B cell (primary cell): ENCODE measurements at regions of chr12 and their contacts with region 1.

Region 1: DNA sequence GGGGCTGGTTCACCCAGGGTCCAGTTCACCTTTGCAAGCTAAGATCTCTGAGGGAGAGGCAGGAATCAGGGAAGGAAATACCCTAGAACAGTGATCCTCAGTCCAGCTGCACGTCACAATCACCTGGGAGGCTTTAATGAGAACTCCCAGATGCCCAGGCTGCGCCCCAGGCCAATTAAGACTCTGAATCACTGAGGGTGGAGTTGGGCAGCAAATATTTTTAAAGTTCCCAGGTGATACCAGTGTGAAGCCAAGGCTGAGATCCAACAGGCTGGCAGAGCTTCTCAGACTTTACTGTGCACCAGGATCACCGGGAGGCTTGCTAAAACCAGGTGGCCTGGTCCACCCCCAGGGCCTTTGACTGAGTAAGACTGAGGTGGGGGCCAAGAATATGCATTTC is 23.8 kb downstream of the MYL2 start:
- DNase-seq: no peak
- ATAC-seq: no peak
- H3K4me3 ChIP-seq: no peak overlapping the region
- H3K4me3 Mint-ChIP-seq: no peak overlapping the region
- H3K27ac ChIP-seq: no peak overlapping the region
- H3K27ac Mint-ChIP-seq: no peak overlapping the region
- H3K4me1 ChIP-seq: peaks cover 5 to 9% of the 10 kb centered on the region in 2 donors
- H3K4me1 Mint-ChIP-seq: peaks cover 4% of the 10 kb centered on the region
- H3K27me3 ChIP-seq: peaks cover 0 to 5% (median 0%) of the 10 kb centered on the region in 4 experiments
- H3K27me3 Mint-ChIP-seq: no peaks in the 10 kb centered on the region
- CTCF ChIP-seq: no peak

Region 2: GRCh38 chr12:110860833-110861296 is 35.7 kb before region 1 on chr12:
- CTCF ChIA-PET with region 1: no interaction called
- POLR2A ChIA-PET with region 1: no interaction called
- intact Hi-C with region 1: no loop called
- DNase-seq: no peak
- ATAC-seq: no peak
- H3K4me3 ChIP-seq: no peak overlapping the region
- H3K4me3 Mint-ChIP-seq: no peak overlapping the region
- H3K27ac ChIP-seq: no peak overlapping the region
- H3K27ac Mint-ChIP-seq: no peak overlapping the region
- H3K4me1 ChIP-seq: no peaks in the 10 kb centered on the region
- H3K4me1 Mint-ChIP-seq: peaks cover 8% of the 10 kb centered on the region
- H3K27me3 ChIP-seq: no peaks in the 10 kb centered on the region
- H3K27me3 Mint-ChIP-seq: no peaks in the 10 kb centered on the region
- CTCF ChIP-seq: no peak

Region 3: GRCh38 chr12:110913119-110914056 is 16.8 kb after region 1 on chr12:
- CTCF ChIA-PET with region 1: interaction called, 16 read pairs
- POLR2A ChIA-PET with region 1: no interaction called
- intact Hi-C with region 1: no loop called
- DNase-seq: peak; percentile 90
- ATAC-seq: peak; percentile 96
- H3K4me3 ChIP-seq: peak overlapping the region in 2 of 5 experiments; percentile 5 to 8
- H3K4me3 Mint-ChIP-seq: peak overlapping the region; percentile 67
- H3K27ac ChIP-seq: peak overlapping the region; percentile 75 to 98
- H3K27ac Mint-ChIP-seq: peak overlapping the region; percentile 95
- H3K4me1 ChIP-seq: peaks cover 30 to 32% of the 10 kb centered on the region in 2 donors
- H3K4me1 Mint-ChIP-seq: peaks cover 37% of the 10 kb centered on the region
- H3K27me3 ChIP-seq: no peaks in the 10 kb centered on the region
- H3K27me3 Mint-ChIP-seq: no peaks in the 10 kb centered on the region
- CTCF ChIP-seq: no peak

Region 4: GRCh38 chr12:110937104-110937641 is 40.6 kb after region 1 on chr12:
- CTCF ChIA-PET with region 1: interaction called, 20 read pairs
- POLR2A ChIA-PET with region 1: no interaction called
- intact Hi-C with region 1: loop called (anchors 1 kb)
- DNase-seq: peak; percentile 78
- ATAC-seq: peak; percentile 51
- H3K4me3 ChIP-seq: peak overlapping the region in 1 of 5 experiments; percentile 26
- H3K4me3 Mint-ChIP-seq: peak overlapping the region; percentile 19
- H3K27ac ChIP-seq: no peak overlapping the region
- H3K27ac Mint-ChIP-seq: no peak overlapping the region
- H3K4me1 ChIP-seq: peaks cover 3 to 8% of the 10 kb centered on the region in 2 donors
- H3K4me1 Mint-ChIP-seq: peaks cover 6% of the 10 kb centered on the region
- H3K27me3 ChIP-seq: peaks cover 0 to 18% (median 0%) of the 10 kb centered on the region in 4 experiments
- H3K27me3 Mint-ChIP-seq: peaks cover 30% of the 10 kb centered on the region
- CTCF ChIP-seq: peak; percentile 100

Region 5: GRCh38 chr12:111010061-111010460 is 113.5 kb after region 1 on chr12:
- CTCF ChIA-PET with region 1: no interaction called
- POLR2A ChIA-PET with region 1: no interaction called
- intact Hi-C with region 1: loop called (anchors 10 kb)
- DNase-seq: no peak
- ATAC-seq: no peak
- H3K4me3 ChIP-seq: no peak overlapping the region
- H3K4me3 Mint-ChIP-seq: no peak overlapping the region
- H3K27ac ChIP-seq: no peak overlapping the region
- H3K27ac Mint-ChIP-seq: no peak overlapping the region
- H3K4me1 ChIP-seq: no peaks in the 10 kb centered on the region
- H3K4me1 Mint-ChIP-seq: no peaks in the 10 kb centered on the region
- H3K27me3 ChIP-seq: peaks cover 0 to 15% (median 5%) of the 10 kb centered on the region in 4 experiments
- H3K27me3 Mint-ChIP-seq: peaks cover 58% of the 10 kb centered on the region
- CTCF ChIP-seq: no peak

Region 6: GRCh38 chr12:111298582-111299436 is 402.2 kb after region 1 on chr12:
- CTCF ChIA-PET with region 1: interaction called, 87 read pairs
- POLR2A ChIA-PET with region 1: no interaction called
- intact Hi-C with region 1: no loop called
- DNase-seq: peak; percentile 66
- ATAC-seq: peak; percentile 49
- H3K4me3 ChIP-seq: no peak overlapping the region
- H3K4me3 Mint-ChIP-seq: no peak overlapping the region
- H3K27ac ChIP-seq: no peak overlapping the region
- H3K27ac Mint-ChIP-seq: no peak overlapping the region
- H3K4me1 ChIP-seq: no peaks in the 10 kb centered on the region
- H3K4me1 Mint-ChIP-seq: no peaks in the 10 kb centered on the region
- H3K27me3 ChIP-seq: peaks cover 0 to 8% (median 0%) of the 10 kb centered on the region in 4 experiments
- H3K27me3 Mint-ChIP-seq: peaks cover 4% of the 10 kb centered on the region
- CTCF ChIP-seq: peak; percentile 86

Region 7: GRCh38 chr12:111313833-111314259 is 417.3 kb after region 1 on chr12:
- CTCF ChIA-PET with region 1: interaction called, 54 read pairs
- POLR2A ChIA-PET with region 1: no interaction called
- intact Hi-C with region 1: loop called (anchors 1 kb)
- DNase-seq: peak; percentile 79
- ATAC-seq: peak; percentile 62
- H3K4me3 ChIP-seq: no peak overlapping the region
- H3K4me3 Mint-ChIP-seq: no peak overlapping the region
- H3K27ac ChIP-seq: no peak overlapping the region
- H3K27ac Mint-ChIP-seq: peak overlapping the region; percentile 3
- H3K4me1 ChIP-seq: peaks cover 5% of the 10 kb centered on the region in 2 donors
- H3K4me1 Mint-ChIP-seq: peaks cover 8% of the 10 kb centered on the region
- H3K27me3 ChIP-seq: peaks cover 0 to 10% (median 1%) of the 10 kb centered on the region in 4 experiments
- H3K27me3 Mint-ChIP-seq: peaks cover 16% of the 10 kb centered on the region
- CTCF ChIP-seq: peak; percentile 97